ENCODE measurements at regions of chr7 and their contacts with region 1.

Region 1: DNA sequence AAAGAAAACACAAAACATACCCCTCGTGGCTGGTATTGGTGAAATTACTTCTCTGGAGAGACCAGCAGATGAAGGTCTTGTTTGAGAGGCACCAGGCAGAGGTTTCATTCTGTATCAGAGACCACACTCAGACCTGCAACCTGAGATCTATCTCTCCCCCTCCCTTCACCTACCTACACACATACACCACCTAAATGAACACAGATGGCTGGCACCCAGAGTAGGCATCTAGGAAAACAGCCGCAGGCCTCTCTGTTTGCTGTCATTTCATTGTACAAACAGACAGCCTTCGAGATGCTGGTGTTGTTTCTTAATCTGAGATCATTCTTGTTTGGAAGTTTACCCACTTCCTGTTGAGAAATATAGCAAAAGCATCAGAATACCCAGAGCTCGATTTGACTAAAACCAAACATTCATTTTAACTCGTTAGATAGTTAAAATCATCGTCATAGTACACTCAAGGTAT is 173.9 kb upstream of the SLC25A13 start:
- DNase-seq: no peak
- H3K4me3 ChIP-seq: no peak overlapping the region
- H3K27ac ChIP-seq: no peak overlapping the region
- H3K4me1 ChIP-seq: no peaks in the 10 kb centered on the region
- H3K27me3 ChIP-seq: no peaks in the 10 kb centered on the region
- CTCF ChIP-seq: no peak
- EP300 ChIP-seq: no peak
- POLR2A ChIP-seq: no peak

Region 2: DNA sequence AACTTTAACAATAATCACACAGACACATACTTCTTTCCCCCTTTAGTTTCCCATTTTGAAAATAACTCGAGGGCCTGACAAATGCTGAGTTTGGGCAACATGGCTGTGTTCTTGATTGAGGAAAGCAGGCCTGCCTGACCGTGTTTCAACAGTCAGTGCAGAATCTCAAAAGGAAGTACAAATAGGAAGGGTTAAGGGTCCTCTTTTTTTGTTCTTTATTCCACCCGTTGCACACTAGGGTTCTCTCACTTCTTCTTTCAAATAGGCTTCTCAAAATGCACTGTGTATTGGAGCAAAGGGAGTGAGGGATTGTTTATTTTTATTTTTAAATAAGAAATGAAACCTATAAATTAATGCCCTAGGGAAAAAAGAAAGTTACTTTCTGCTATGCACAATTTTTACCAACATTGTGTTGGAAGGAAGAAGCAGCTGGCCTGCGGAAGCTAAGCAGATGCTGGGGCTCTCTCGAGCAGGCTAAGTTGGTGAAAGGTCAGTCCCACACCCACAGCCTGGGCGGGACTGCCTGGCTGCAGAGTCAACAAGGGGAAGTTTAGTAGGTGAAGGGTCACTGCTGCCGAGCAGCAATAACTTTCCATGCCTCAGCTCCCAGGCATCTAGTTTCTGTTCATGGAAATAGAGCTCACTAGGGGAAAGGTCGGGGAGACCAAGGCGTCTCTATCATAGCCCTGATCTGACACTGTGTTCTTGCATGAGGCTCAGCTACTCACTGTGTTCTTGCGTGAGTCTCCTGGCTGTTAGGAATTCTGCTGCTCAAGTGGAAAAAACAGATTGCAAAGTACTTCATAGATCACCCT is 887.2 kb before region 1 on chr7:
- in situ Hi-C with region 1: no loop called
- intact Hi-C with region 1: no loop called
- DNase-seq: peak; percentile 96
- H3K4me3 ChIP-seq: peak overlapping the region in 1 of 4 donors; percentile 16
- H3K27ac ChIP-seq: peak overlapping the region; percentile 92 to 95 (median 94)
- H3K4me1 ChIP-seq: peaks cover 32 to 42% (median 37%) of the 10 kb centered on the region in 4 donors
- H3K27me3 ChIP-seq: no peaks in the 10 kb centered on the region
- CTCF ChIP-seq: no peak
- EP300 ChIP-seq: peak; percentile 99
- POLR2A ChIP-seq: peak; percentile 56

Region 3: GRCh38 chr7:96200740-96201139 is 295.0 kb before region 1 on chr7:
- in situ Hi-C with region 1: no loop called
- intact Hi-C with region 1: no loop called
- DNase-seq: no peak
- H3K4me3 ChIP-seq: no peak overlapping the region
- H3K27ac ChIP-seq: no peak overlapping the region
- H3K4me1 ChIP-seq: peaks cover 0 to 3% (median 0%) of the 10 kb centered on the region in 4 donors
- H3K27me3 ChIP-seq: no peaks in the 10 kb centered on the region
- CTCF ChIP-seq: no peak
- EP300 ChIP-seq: no peak
- POLR2A ChIP-seq: no peak

Region 4: DNA sequence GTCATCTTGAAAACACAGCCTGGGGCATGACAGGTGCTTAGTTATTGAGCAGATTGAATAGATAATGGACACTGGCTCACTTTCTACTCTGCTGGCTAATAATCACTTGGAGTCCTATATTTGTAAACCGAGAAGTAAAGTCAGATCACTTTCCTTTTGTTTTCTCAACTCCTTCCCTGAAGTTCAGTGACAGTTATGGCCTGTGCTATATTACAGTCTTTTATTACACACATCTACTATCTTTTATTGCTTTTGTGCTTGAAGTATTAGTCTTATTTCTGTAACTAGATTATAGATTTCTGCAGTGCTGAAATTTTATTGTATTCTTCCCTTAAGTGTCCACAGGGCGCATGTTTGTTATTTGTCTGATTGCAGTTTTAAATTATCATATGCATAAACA is 1099.7 kb after region 1 on chr7:
- in situ Hi-C with region 1: no loop called
- intact Hi-C with region 1: loop called (anchors 5 kb)
- DNase-seq: no peak
- H3K4me3 ChIP-seq: no peak overlapping the region
- H3K27ac ChIP-seq: peak overlapping the region in 1 of 4 donors; percentile 30
- H3K4me1 ChIP-seq: no peaks in the 10 kb centered on the region
- H3K27me3 ChIP-seq: no peaks in the 10 kb centered on the region
- CTCF ChIP-seq: no peak
- EP300 ChIP-seq: no peak
- POLR2A ChIP-seq: no peak

Measured in transverse colon (tissue), 4 donors.